K562 (cell line): ENCODE measurements at regions of chr2 and their contacts with region 1.

Region 1: DNA sequence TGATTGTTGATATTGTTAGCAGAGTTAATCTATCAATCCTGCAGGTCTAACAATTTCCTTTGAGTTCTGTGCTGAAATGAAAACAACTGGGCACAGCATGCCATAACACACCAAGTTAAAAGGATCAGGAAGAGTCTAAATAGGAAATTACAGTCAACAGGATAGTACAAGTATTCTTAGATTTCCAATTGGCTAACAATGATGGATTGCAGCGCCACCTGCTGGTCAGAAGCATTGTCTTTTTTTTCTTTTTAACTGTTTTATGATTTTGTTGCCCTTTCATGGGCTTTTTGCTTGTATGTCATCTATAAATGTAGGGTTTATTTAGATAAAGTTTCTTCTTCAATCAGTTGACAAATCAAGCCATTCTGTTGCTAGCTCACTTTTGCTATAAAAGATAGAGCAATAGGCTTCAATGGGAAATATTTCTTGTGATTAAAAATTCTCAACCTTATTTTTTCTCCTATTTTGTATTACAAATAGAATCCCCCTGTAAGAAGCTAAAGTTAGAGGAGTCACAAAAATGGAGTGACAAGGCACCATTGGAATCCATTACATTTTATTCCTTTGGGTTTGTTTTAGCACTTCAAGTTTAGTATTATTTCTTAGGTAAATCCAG is 40.8 kb upstream of the RPRM start:
- DNase-seq: peak; percentile 32 to 67 (median 37)
- ATAC-seq: peak; percentile 25; the same call in 1 of the 3 replicates
- H3K4me3 ChIP-seq: no peak overlapping the region
- H3K27ac ChIP-seq: no peak overlapping the region
- H3K4me1 ChIP-seq: no peaks in the 10 kb centered on the region
- H3K27me3 ChIP-seq: no peaks in the 10 kb centered on the region
- CTCF ChIP-seq: peak; percentile 43 to 74 (median 67); a peak in 5 of 6 replicates
- EP300 ChIP-seq: no peak
- POLR2A ChIP-seq: no peak
- RAD21 ChIP-seq: peak; percentile 54 to 75

Region 2: GRCh38 chr2:152062125-152063091 is 1457.0 kb before region 1 on chr2:
- CTCF ChIA-PET with region 1: no interaction called
- POLR2A ChIA-PET with region 1: no interaction called
- in situ Hi-C with region 1: loop called (anchors 25 kb)
- intact Hi-C with region 1: no loop called
- DNase-seq: no peak
- ATAC-seq: no peak
- H3K4me3 ChIP-seq: no peak overlapping the region
- H3K27ac ChIP-seq: no peak overlapping the region
- H3K4me1 ChIP-seq: no peaks in the 10 kb centered on the region
- H3K27me3 ChIP-seq: peaks cover 0 to 4% of the 10 kb centered on the region in 2 experiments; a peak in 1 of 5 replicates
- CTCF ChIP-seq: no peak
- EP300 ChIP-seq: no peak
- POLR2A ChIP-seq: no peak
- RAD21 ChIP-seq: no peak

Region 3: DNA sequence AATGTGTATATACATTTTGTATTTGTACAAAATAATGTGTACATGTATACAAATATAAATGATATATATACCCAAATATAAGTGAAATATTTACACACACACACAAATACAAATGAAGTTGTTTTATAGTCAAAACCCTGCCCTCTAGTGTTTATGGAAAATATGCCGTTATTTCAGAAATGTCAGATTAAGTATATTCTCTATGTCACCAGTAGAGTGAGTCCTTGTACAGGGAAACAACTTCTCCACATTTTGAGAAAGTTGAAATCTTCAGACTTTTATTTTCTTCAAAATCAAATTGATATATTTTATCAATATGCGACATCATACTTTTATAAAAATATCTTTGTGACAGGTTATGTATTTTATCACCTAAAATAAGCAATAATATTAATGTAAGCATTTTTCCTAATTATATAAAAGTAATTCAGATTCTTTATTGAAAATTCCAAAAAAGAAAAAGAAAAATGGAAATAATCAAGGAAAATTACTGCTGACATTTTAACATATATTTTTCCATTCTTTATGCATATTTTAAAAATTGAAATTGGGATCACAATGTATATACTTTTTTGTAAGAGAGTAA is 778.5 kb before region 1 on chr2:
- CTCF ChIA-PET with region 1: interaction called, 7 read pairs
- POLR2A ChIA-PET with region 1: no interaction called
- in situ Hi-C with region 1: no loop called
- intact Hi-C with region 1: loop called (anchors 5 kb)
- DNase-seq: peak; percentile 49 to 65 (median 58)
- ATAC-seq: peak; percentile 89
- H3K4me3 ChIP-seq: no peak overlapping the region
- H3K27ac ChIP-seq: no peak overlapping the region
- H3K4me1 ChIP-seq: no peaks in the 10 kb centered on the region
- H3K27me3 ChIP-seq: no peaks in the 10 kb centered on the region
- CTCF ChIP-seq: peak; percentile 62 to 99 (median 98)
- EP300 ChIP-seq: no peak
- POLR2A ChIP-seq: no peak
- RAD21 ChIP-seq: peak; percentile 78 to 79

Region 4: GRCh38 chr2:152925547-152926327 is 593.6 kb before region 1 on chr2:
- CTCF ChIA-PET with region 1: no interaction called
- POLR2A ChIA-PET with region 1: no interaction called
- in situ Hi-C with region 1: no loop called
- intact Hi-C with region 1: loop called (anchors 5 kb)
- DNase-seq: peak; percentile 25 to 60 (median 36)
- ATAC-seq: peak; percentile 86
- H3K4me3 ChIP-seq: no peak overlapping the region
- H3K27ac ChIP-seq: no peak overlapping the region
- H3K4me1 ChIP-seq: no peaks in the 10 kb centered on the region
- H3K27me3 ChIP-seq: no peaks in the 10 kb centered on the region
- CTCF ChIP-seq: peak; percentile 48 to 66 (median 54)
- EP300 ChIP-seq: no peak
- POLR2A ChIP-seq: no peak
- RAD21 ChIP-seq: peak in 1 of 2 experiments; percentile 57; a peak in 2 of 4 replicates

Region 5: DNA sequence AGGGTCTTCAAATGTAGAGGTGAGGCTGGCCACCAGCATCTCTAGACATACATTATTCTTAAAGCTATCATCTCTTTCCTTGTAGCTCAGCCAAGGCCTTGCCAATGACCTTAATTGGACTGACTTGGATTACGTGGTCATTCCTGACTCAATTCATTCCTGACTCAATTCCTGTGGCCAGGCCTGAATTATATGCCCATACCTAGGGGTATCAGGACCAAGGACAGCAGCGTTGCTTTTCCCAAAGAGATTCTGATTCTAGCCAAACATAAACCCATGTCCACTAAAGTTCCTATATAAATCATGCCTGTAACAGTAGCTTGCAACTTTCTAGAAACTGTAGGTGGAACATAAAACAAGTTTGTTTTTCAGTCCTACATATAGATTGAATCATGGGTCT is 569.2 kb before region 1 on chr2:
- CTCF ChIA-PET with region 1: no interaction called
- POLR2A ChIA-PET with region 1: no interaction called
- in situ Hi-C with region 1: no loop called
- intact Hi-C with region 1: no loop called
- DNase-seq: no peak
- ATAC-seq: no peak
- H3K4me3 ChIP-seq: no peak overlapping the region
- H3K27ac ChIP-seq: no peak overlapping the region
- H3K4me1 ChIP-seq: no peaks in the 10 kb centered on the region
- H3K27me3 ChIP-seq: no peaks in the 10 kb centered on the region
- CTCF ChIP-seq: no peak
- EP300 ChIP-seq: no peak
- POLR2A ChIP-seq: no peak
- RAD21 ChIP-seq: no peak

Region 6: DNA sequence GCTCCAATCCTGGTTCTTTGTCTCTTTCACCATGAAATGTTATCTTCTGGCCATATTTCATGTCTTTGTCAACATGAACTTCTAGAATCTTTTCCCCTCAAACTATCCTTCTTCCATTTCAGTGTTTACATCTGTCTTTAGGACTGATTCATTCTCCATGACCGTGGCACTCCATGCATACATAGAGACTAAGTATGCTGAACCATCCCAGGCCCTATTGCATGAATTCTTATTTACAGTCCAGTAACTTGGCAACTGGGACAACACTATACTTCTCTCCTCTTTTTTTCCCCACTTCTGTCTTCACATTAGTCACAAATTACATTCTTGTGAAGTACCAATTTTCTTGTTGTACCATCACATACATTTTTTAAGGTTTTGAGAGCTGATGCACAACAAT is 242.6 kb after region 1 on chr2:
- CTCF ChIA-PET with region 1: no interaction called
- POLR2A ChIA-PET with region 1: no interaction called
- in situ Hi-C with region 1: no loop called
- intact Hi-C with region 1: no loop called
- DNase-seq: no peak
- ATAC-seq: no peak
- H3K4me3 ChIP-seq: no peak overlapping the region
- H3K27ac ChIP-seq: no peak overlapping the region
- H3K4me1 ChIP-seq: no peaks in the 10 kb centered on the region
- H3K27me3 ChIP-seq: no peaks in the 10 kb centered on the region
- CTCF ChIP-seq: no peak
- EP300 ChIP-seq: no peak
- POLR2A ChIP-seq: no peak
- RAD21 ChIP-seq: no peak